MCF 10A (cell line): ENCODE measurements at regions of chr1 and their contacts with region 1.

Region 1: DNA sequence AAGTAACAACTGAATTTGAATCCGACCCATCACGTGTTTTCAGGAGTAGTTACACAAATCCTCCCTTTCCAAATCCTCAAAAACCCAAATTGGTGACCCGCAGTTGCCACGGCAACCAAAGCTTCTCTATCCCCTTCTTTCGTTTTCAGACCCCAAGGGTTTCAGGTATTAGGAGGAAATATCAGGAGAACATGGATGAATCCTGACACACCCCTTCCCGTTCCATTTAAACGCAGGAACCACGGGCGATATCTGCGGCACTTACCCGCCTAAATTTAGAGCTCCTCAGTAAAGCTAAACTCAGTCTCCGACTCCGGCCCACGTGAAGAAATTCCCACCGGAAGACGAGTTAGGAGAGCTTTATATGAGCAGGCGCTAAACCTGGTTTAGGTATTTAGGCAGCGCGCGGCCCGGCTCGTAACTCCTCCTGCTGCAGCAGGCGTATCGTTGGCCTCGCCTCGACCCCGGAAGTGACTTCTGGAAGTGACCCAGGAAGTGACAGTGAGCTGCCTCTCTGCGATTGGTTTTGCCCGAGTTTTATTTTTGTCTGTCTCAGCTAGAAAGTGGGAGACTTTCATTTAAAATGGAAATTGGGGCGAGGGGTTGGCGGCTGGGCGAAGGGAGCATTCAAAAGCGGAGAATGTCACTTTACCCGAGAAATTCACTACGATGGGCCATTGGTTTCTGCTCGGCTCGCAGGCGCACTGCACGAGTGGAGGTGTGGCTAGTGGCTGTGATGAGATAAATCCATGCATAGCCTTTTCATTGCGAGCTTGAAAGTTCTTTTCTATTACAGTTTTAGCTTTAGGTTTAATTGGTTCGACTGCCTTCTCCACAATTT is at the start of gene TAF1A:
- DNase-seq: peak; percentile 97
- H3K4me3 Mint-ChIP-seq: peak within 1 kb of the TSS; percentile 97
- H3K27ac Mint-ChIP-seq: peak within 1 kb of the TSS; percentile 96
- H3K4me1 Mint-ChIP-seq: peaks cover 58% of the 10 kb centered on the region
- H3K27me3 Mint-ChIP-seq: no peaks in the 10 kb centered on the region
- CTCF ChIP-seq: no peak
- total RNA-seq, gene TAF1A: 38.2 and 39.3 TPM in 2 replicates

Region 2: GRCh38 chr1:222546548-222547259 is 43.0 kb before region 1 on chr1:
- CTCF ChIA-PET with region 1: interaction called, 4 read pairs
- POLR2A ChIA-PET with region 1: interaction called, 46 read pairs
- intact Hi-C with region 1: no loop called
- DNase-seq: peak; percentile 98
- H3K4me3 Mint-ChIP-seq: peak overlapping the region; percentile 46
- H3K27ac Mint-ChIP-seq: peak overlapping the region; percentile 5
- H3K4me1 Mint-ChIP-seq: peaks cover 26% of the 10 kb centered on the region
- H3K27me3 Mint-ChIP-seq: no peaks in the 10 kb centered on the region
- CTCF ChIP-seq: no peak

Region 3: DNA sequence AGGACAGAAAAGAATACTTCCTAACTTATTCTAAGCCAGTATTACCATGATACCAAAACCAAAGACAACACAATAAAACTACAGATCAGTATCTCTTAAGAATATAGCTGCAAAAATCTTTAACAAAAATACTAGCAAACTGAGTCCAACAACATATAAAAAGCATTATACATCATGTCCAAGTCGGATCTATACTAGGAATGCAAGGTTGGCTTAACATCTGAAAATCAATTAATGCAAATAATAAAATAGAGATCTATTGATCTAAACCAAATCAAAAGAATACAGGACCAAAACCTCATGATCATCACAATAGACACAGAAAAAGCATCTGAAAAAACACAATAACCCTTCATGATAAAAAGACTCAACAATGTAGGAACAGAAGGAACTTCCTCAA is 18.8 kb before region 1 on chr1:
- CTCF ChIA-PET with region 1: no interaction called
- POLR2A ChIA-PET with region 1: interaction called, 32 read pairs
- intact Hi-C with region 1: no loop called
- DNase-seq: no peak
- H3K4me3 Mint-ChIP-seq: no peak overlapping the region
- H3K27ac Mint-ChIP-seq: no peak overlapping the region
- H3K4me1 Mint-ChIP-seq: no peaks in the 10 kb centered on the region
- H3K27me3 Mint-ChIP-seq: no peaks in the 10 kb centered on the region
- CTCF ChIP-seq: no peak

Region 4: DNA sequence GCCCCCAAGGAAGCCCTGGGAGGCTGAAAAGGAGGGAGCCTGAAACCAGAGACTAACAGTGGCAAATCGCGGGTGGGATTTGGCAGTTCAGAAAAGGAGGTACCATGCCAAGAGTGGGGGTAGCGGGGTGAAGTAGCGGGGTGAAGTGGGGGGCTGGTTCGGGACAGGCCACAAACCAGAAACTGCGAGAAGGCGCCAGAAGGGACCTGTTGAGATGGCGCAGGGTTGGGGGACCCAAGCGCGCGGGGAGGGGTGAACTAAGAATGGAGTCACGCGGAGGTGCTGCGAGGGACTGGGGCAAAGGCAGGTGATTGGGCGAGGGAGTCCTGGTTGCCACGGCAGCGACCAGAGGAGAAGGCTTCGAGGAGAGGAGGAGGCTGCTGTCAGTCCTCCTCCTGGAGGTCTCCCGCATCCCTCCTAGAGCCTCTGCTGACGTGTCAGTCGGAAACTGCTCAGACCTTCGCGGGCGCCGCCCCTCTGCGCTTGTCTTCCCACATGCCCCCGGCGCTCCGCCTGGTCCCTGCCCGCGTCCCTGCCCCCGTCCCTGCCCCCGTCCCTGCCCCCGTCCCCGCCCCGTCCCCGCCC is 27.8 kb after region 1 on chr1:
- CTCF ChIA-PET with region 1: interaction called, 7 read pairs
- POLR2A ChIA-PET with region 1: interaction called, 27 read pairs
- intact Hi-C with region 1: loop called (anchors 1 kb)
- DNase-seq: peak; percentile 96
- H3K4me3 Mint-ChIP-seq: peak overlapping the region; percentile 79
- H3K27ac Mint-ChIP-seq: peak overlapping the region; percentile 46
- H3K4me1 Mint-ChIP-seq: peaks cover 27% of the 10 kb centered on the region
- H3K27me3 Mint-ChIP-seq: peaks cover 26% of the 10 kb centered on the region
- CTCF ChIP-seq: no peak

Region 5: GRCh38 chr1:222643938-222644635 is 54.4 kb after region 1 on chr1:
- CTCF ChIA-PET with region 1: interaction called, 5 read pairs
- POLR2A ChIA-PET with region 1: interaction called, 39 read pairs
- intact Hi-C with region 1: no loop called
- DNase-seq: peak; percentile 100
- H3K4me3 Mint-ChIP-seq: peak overlapping the region; percentile 85
- H3K27ac Mint-ChIP-seq: peak overlapping the region; percentile 97
- H3K4me1 Mint-ChIP-seq: peaks cover 10% of the 10 kb centered on the region
- H3K27me3 Mint-ChIP-seq: no peaks in the 10 kb centered on the region
- CTCF ChIP-seq: no peak

Region 6: DNA sequence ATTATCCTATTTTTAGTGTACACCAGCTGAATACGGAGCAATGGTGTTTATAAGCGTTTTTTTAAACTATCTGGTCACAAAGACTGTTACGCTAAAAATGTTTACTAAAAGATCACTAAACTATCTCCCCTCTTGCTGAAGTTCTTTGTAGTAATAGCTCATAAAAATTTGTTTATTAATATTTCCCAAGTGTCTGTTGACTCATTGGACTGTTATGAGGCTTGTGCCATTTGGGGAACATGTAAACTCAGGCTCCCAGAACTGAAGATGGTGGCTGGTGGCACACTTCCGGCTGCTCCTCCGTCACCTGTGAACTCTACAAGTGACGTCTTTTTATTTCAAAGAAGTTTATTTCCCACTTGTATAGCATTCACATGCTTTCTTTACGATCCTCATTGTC is 76.3 kb after region 1 on chr1:
- CTCF ChIA-PET with region 1: no interaction called
- POLR2A ChIA-PET with region 1: no interaction called
- intact Hi-C with region 1: no loop called
- DNase-seq: peak; percentile 11
- H3K4me3 Mint-ChIP-seq: no peak overlapping the region
- H3K27ac Mint-ChIP-seq: peak overlapping the region; percentile 29
- H3K4me1 Mint-ChIP-seq: no peaks in the 10 kb centered on the region
- H3K27me3 Mint-ChIP-seq: no peaks in the 10 kb centered on the region
- CTCF ChIP-seq: no peak